SK-N-SH (cell line): ENCODE measurements at regions of chr1 and their contacts with region 1.

Region 1: DNA sequence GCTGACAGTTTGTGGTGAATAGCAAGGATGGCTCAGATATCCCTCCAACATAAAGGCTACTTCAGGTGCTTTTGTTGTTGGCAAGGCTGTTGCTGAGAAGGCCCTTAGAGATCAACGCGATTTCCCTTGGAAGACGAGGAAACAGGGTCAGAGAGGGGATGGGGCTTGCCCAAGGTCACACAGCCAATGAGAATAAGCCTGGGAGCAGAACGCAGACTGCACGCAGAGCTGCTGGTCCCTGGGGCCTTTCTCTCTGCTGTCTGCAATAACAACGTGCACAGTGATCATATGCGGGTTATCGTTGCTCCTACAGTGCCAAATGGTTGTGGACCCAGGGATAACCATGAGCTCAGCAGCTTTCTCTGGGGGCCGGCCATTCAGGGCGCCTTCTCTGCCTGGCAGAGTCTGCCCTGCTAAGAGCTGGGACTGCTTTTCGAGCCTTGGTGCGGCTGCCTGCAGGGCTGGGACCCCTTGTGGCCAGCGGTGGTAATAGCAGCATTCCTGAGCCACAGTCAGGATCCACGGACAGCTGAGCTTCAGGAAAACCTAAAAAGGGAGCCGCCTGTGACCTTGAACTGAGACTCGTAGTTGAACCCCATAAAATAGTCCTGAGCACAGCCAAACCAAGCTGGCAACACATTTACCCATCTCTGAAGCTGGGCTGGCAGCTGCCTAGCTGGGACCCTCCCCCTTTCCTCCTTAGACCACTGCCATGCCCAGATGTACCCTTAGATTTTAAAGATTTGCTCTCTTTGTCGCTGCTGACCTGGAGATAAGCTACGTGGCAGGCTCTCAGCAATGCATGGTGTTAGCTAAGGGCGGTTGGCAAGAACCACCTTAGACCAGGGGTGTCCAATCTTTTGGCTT is 39.8 kb downstream of the HTR6 start:
- DNase-seq: peak; percentile 84
- H3K4me3 ChIP-seq: peak overlapping the region in 1 of 2 experiments; percentile 24; a peak in 1 of 4 replicates
- H3K27ac ChIP-seq: no peak overlapping the region
- H3K4me1 ChIP-seq: peaks cover 0 to 6% of the 10 kb centered on the region in 2 experiments; a peak in 1 of 4 replicates
- H3K27me3 ChIP-seq: no peaks in the 10 kb centered on the region
- CTCF ChIP-seq: peak; percentile 89
- EP300 ChIP-seq: no peak
- RAD21 ChIP-seq: peak; percentile 73

Region 2: DNA sequence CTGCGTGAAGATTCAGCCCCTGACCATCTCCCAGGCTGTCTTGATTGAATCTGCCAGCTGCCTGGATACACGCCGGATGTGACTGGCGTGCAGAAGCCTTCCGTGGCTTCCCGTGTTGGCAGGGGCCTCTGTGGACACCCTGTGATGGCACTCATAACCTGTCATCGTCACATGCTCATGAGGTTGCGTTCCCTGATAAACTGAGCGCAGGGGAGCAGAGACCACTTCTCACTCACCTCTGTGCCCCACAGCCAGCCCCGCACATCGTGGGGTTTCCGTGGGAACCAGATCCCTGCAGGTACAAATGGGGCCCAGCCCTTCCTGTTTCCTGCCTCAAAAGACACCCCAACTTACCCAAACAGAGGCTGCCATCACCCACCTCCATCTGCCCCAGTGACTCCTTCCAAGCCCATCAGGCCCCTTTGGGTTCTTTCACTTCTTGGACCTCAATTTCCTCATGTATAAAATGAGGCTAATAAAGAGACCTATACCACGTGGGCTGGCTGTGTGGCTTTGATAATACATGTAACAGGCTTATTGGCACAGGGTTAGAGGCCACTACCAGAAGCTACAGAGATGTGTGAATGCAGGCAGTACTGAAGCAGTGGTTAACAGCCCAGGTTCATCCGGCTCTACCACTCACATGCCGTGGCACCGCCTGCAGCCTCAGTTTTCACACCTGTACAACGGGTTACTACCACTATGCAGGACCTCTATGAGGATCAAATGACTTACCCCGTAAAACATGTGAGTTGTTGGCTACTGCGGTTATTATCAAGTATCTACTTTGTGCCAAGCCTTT is 16.2 kb before region 1 on chr1:
- CTCF ChIA-PET with region 1: interaction called, 553 read pairs
- POLR2A ChIA-PET with region 1: no interaction called
- DNase-seq: no peak
- H3K4me3 ChIP-seq: no peak overlapping the region
- H3K27ac ChIP-seq: no peak overlapping the region; a peak in 1 of 4 replicates
- H3K4me1 ChIP-seq: peaks cover 0 to 12% of the 10 kb centered on the region in 2 experiments; a peak in 1 of 4 replicates
- H3K27me3 ChIP-seq: no peaks in the 10 kb centered on the region
- CTCF ChIP-seq: no peak
- EP300 ChIP-seq: no peak
- RAD21 ChIP-seq: no peak

Region 3: GRCh38 chr1:19728413-19729145 is 24.1 kb after region 1 on chr1:
- CTCF ChIA-PET with region 1: interaction called, 21 read pairs
- POLR2A ChIA-PET with region 1: no interaction called
- DNase-seq: no peak
- H3K4me3 ChIP-seq: no peak overlapping the region
- H3K27ac ChIP-seq: no peak overlapping the region
- H3K4me1 ChIP-seq: no peaks in the 10 kb centered on the region; a peak in 1 of 4 replicates
- H3K27me3 ChIP-seq: no peaks in the 10 kb centered on the region
- CTCF ChIP-seq: no peak
- EP300 ChIP-seq: no peak
- RAD21 ChIP-seq: no peak

Region 4: GRCh38 chr1:19756480-19756879 is 52.0 kb after region 1 on chr1:
- CTCF ChIA-PET with region 1: no interaction called
- POLR2A ChIA-PET with region 1: no interaction called
- DNase-seq: no peak
- H3K4me3 ChIP-seq: no peak overlapping the region
- H3K27ac ChIP-seq: no peak overlapping the region
- H3K4me1 ChIP-seq: peaks cover 2 to 4% of the 10 kb centered on the region in 2 experiments; a peak in 2 of 4 replicates
- H3K27me3 ChIP-seq: no peaks in the 10 kb centered on the region
- CTCF ChIP-seq: no peak
- EP300 ChIP-seq: no peak
- RAD21 ChIP-seq: no peak